Natural killer cell (primary cell): ENCODE measurements at regions of chr7 and their contacts with region 1.

Region 1: GRCh38 chr7:44581879-44582603 is at the start of gene TMED4:
- DNase-seq: peak; percentile 100
- ATAC-seq: peak; percentile 87 to 97 (median 87)
- H3K4me3 ChIP-seq: peak within 1 kb of the TSS; percentile 75
- H3K4me3 Mint-ChIP-seq: peak within 1 kb of the TSS; percentile 91
- H3K27ac ChIP-seq: peak within 1 kb of the TSS; percentile 95
- H3K27ac Mint-ChIP-seq: peak within 1 kb of the TSS; percentile 97 to 98
- H3K4me1 ChIP-seq: peaks cover 23% of the 10 kb centered on the region
- H3K4me1 Mint-ChIP-seq: peaks cover 30 to 31% of the 10 kb centered on the region in 2 donors
- H3K27me3 ChIP-seq: no peaks in the 10 kb centered on the region
- H3K27me3 Mint-ChIP-seq: no peaks in the 10 kb centered on the region
- CTCF ChIP-seq: no peak
- total RNA-seq, gene TMED4: 93.1 to 101 (median 94.1) TPM

Region 2: GRCh38 chr7:44638611-44639557 is 56.8 kb after region 1 on chr7:
- intact Hi-C with region 1: loop called (anchors 2 kb)
- DNase-seq: peak; percentile 72 to 87
- ATAC-seq: peak; percentile 79 to 91 (median 85)
- H3K4me3 ChIP-seq: no peak overlapping the region
- H3K4me3 Mint-ChIP-seq: peak overlapping the region; percentile 90
- H3K27ac ChIP-seq: peak overlapping the region; percentile 97
- H3K27ac Mint-ChIP-seq: peak overlapping the region; percentile 94 to 96
- H3K4me1 ChIP-seq: peaks cover 68% of the 10 kb centered on the region
- H3K4me1 Mint-ChIP-seq: peaks cover 65% of the 10 kb centered on the region in 2 donors
- H3K27me3 ChIP-seq: no peaks in the 10 kb centered on the region
- H3K27me3 Mint-ChIP-seq: no peaks in the 10 kb centered on the region
- CTCF ChIP-seq: no peak

Region 3: GRCh38 chr7:44748045-44748947 is 166.3 kb after region 1 on chr7 and contains the start of gene ZMIZ2:
- intact Hi-C with region 1: loop called (anchors 5 kb)
- DNase-seq: peak; percentile 93 to 94
- ATAC-seq: peak; percentile 89 to 97 (median 93)
- H3K4me3 ChIP-seq: peak within 1 kb of the TSS; percentile 78
- H3K4me3 Mint-ChIP-seq: peak within 1 kb of the TSS; percentile 94
- H3K27ac ChIP-seq: peak within 1 kb of the TSS; percentile 77
- H3K27ac Mint-ChIP-seq: peak within 1 kb of the TSS; percentile 85 to 96
- H3K4me1 ChIP-seq: peaks cover 31% of the 10 kb centered on the region
- H3K4me1 Mint-ChIP-seq: peaks cover 37 to 48% of the 10 kb centered on the region in 2 donors
- H3K27me3 ChIP-seq: no peaks in the 10 kb centered on the region
- H3K27me3 Mint-ChIP-seq: no peaks in the 10 kb centered on the region
- CTCF ChIP-seq: no peak
- total RNA-seq, gene ZMIZ2: 152 to 170 (median 167) TPM

Region 4: GRCh38 chr7:44885394-44886317 is 303.6 kb after region 1 on chr7 and contains the start of gene PURB:
- intact Hi-C with region 1: loop called (anchors 1 kb)
- DNase-seq: peak; percentile 98 to 99
- ATAC-seq: peak; percentile 83 to 94 (median 86)
- H3K4me3 ChIP-seq: peak within 1 kb of the TSS; percentile 75
- H3K4me3 Mint-ChIP-seq: peak within 1 kb of the TSS; percentile 99
- H3K27ac ChIP-seq: peak within 1 kb of the TSS; percentile 97
- H3K27ac Mint-ChIP-seq: peak within 1 kb of the TSS; percentile 100
- H3K4me1 ChIP-seq: peaks cover 35% of the 10 kb centered on the region
- H3K4me1 Mint-ChIP-seq: peaks cover 34 to 45% of the 10 kb centered on the region in 2 donors
- H3K27me3 ChIP-seq: no peaks in the 10 kb centered on the region
- H3K27me3 Mint-ChIP-seq: no peaks in the 10 kb centered on the region
- CTCF ChIP-seq: no peak
- total RNA-seq, gene PURB: 28.5 to 36.0 (median 33.7) TPM